MCF 10A (cell line): ENCODE measurements at regions of chr2 and their contacts with region 1.

Region 1: GRCh38 chr2:131093006-131093695 is at the start of gene FAM168B:
- DNase-seq: peak; percentile 85
- H3K4me3 Mint-ChIP-seq: peak within 1 kb of the TSS; percentile 89
- H3K27ac Mint-ChIP-seq: peak within 1 kb of the TSS; percentile 96
- H3K4me1 Mint-ChIP-seq: peaks cover 6% of the 10 kb centered on the region
- H3K27me3 Mint-ChIP-seq: no peaks in the 10 kb centered on the region
- CTCF ChIP-seq: no peak
- total RNA-seq, gene FAM168B: 159 and 172 TPM in 2 replicates

Region 2: DNA sequence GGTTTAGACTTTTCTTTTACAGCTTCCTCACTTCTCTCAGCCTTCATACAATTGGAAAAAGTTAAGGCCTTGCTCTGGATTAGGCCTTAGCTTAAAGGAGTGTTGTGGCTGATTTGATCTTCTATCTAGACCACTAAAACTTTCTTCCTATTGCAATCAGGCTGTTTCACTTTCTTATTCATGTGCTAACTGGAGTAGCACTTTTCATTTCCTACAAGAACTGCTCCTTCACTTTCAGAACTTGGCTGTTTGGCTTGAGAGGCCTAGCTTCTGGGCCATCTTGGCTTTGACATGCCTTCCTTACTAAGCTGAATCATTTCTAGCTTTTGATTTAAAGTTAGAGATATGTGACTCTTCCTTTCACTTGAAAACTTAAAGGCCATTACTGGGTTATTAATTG is 142.1 kb before region 1 on chr2:
- CTCF ChIA-PET with region 1: no interaction called
- POLR2A ChIA-PET with region 1: no interaction called
- intact Hi-C with region 1: no loop called
- DNase-seq: no peak
- H3K4me3 Mint-ChIP-seq: no peak overlapping the region
- H3K27ac Mint-ChIP-seq: no peak overlapping the region
- H3K4me1 Mint-ChIP-seq: no peaks in the 10 kb centered on the region
- H3K27me3 Mint-ChIP-seq: no peaks in the 10 kb centered on the region
- CTCF ChIP-seq: no peak

Region 3: GRCh38 chr2:131016826-131017741 is 76.1 kb before region 1 on chr2:
- CTCF ChIA-PET with region 1: interaction called, 4 read pairs
- POLR2A ChIA-PET with region 1: interaction called, 41 read pairs
- intact Hi-C with region 1: no loop called
- DNase-seq: peak; percentile 99
- H3K4me3 Mint-ChIP-seq: peak overlapping the region; percentile 71
- H3K27ac Mint-ChIP-seq: peak overlapping the region; percentile 97
- H3K4me1 Mint-ChIP-seq: peaks cover 35% of the 10 kb centered on the region
- H3K27me3 Mint-ChIP-seq: no peaks in the 10 kb centered on the region
- CTCF ChIP-seq: no peak

Region 4: GRCh38 chr2:131076707-131077106 is 16.4 kb before region 1 on chr2:
- CTCF ChIA-PET with region 1: interaction called, 3 read pairs
- POLR2A ChIA-PET with region 1: interaction called, 14 read pairs
- intact Hi-C with region 1: no loop called
- DNase-seq: no peak
- H3K4me3 Mint-ChIP-seq: no peak overlapping the region
- H3K27ac Mint-ChIP-seq: no peak overlapping the region
- H3K4me1 Mint-ChIP-seq: peaks cover 18% of the 10 kb centered on the region
- H3K27me3 Mint-ChIP-seq: no peaks in the 10 kb centered on the region
- CTCF ChIP-seq: no peak

Region 5: GRCh38 chr2:131105156-131105949 is 12.2 kb after region 1 on chr2 and contains the start of gene PLEKHB2:
- CTCF ChIA-PET with region 1: interaction called, 8 read pairs
- POLR2A ChIA-PET with region 1: interaction called, 138 read pairs
- intact Hi-C with region 1: loop called (anchors 1 kb)
- DNase-seq: peak; percentile 87
- H3K4me3 Mint-ChIP-seq: peak within 1 kb of the TSS; percentile 87
- H3K27ac Mint-ChIP-seq: peak within 1 kb of the TSS; percentile 92
- H3K4me1 Mint-ChIP-seq: peaks cover 15% of the 10 kb centered on the region
- H3K27me3 Mint-ChIP-seq: no peaks in the 10 kb centered on the region
- CTCF ChIP-seq: no peak
- total RNA-seq, gene PLEKHB2: 57.6 and 78.1 TPM in 2 replicates